ENCODE measurements at regions of chr1 and their contacts with region 1.

Region 1: GRCh38 chr1:19596714-19597495 is 47.2 kb upstream of the NBL1 start:
- DNase-seq: peak; percentile 99
- ATAC-seq: peak; percentile 94
- H3K4me3 ChIP-seq: peak overlapping the region; percentile 72 to 90 (median 78)
- H3K27ac ChIP-seq: peak overlapping the region; percentile 88
- H3K4me1 ChIP-seq: peaks cover 52% of the 10 kb centered on the region
- H3K27me3 ChIP-seq: no peaks in the 10 kb centered on the region; a peak in 1 of 5 replicates
- CTCF ChIP-seq: 0 out of 2 replicates have a peak, but pooled peaks have one; percentile 1
- EP300 ChIP-seq: 0 out of 4 replicates have a peak, but pooled peaks of 1 of the 2 experiments have one; percentile 5
- POLR2A ChIP-seq: peak; percentile 79 to 82
- RAD21 ChIP-seq: peak; percentile 39; the same call in 1 of the 2 replicates

Region 2: GRCh38 chr1:19384113-19384512 is 212.8 kb before region 1 on chr1:
- CTCF ChIA-PET with region 1: no interaction called
- POLR2A ChIA-PET with region 1: no interaction called
- in situ Hi-C with region 1: no loop called
- intact Hi-C with region 1: loop called (anchors 10 kb)
- DNase-seq: no peak
- ATAC-seq: no peak
- H3K4me3 ChIP-seq: no peak overlapping the region
- H3K27ac ChIP-seq: no peak overlapping the region
- H3K4me1 ChIP-seq: peaks cover 52% of the 10 kb centered on the region
- H3K27me3 ChIP-seq: no peaks in the 10 kb centered on the region
- CTCF ChIP-seq: no peak
- EP300 ChIP-seq: no peak
- POLR2A ChIP-seq: no peak
- RAD21 ChIP-seq: no peak

Region 3: DNA sequence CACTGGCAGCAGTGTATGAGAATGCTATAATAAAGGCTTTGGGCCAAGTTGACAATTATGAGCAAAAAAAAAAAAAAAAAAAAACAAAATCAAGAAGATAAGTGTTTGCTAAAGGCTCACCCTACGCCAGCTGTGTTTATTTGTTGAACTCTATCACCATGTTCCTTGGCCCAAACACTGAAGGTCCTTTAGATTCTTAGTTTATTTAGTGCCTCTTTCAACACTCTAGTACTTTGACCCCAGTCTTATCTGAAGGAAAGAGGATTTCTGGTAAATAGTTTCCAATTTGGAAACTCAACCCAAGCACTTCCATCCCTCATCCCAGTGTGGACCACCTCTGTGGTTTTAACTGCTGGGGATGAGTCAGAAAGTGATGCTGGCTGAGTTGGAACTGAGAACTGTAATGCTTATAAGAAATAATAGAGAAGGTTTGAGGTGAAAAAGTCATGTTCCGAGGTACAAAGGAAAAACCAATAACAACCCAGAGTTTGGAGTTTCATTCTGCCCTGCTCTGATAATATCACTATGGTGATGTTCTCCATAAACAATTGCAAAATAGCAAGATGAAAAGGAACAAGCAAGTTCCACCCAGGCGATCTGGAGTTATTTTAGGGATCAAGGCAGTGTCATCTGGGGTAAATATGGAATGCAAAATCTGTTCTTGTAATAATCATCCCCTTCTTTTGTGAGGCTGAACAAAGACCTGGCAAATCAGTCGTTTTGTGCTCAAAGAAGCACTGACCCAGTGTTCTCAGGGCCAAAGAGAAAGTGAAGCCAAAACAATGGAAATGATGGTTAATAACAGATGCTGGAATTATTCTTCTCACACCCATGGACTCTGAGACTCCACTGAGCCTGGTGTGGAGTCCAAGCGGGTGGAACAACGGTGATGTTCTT is 91.9 kb before region 1 on chr1:
- CTCF ChIA-PET with region 1: no interaction called
- POLR2A ChIA-PET with region 1: no interaction called
- in situ Hi-C with region 1: no loop called
- intact Hi-C with region 1: no loop called
- DNase-seq: no peak
- ATAC-seq: no peak
- H3K4me3 ChIP-seq: no peak overlapping the region
- H3K27ac ChIP-seq: no peak overlapping the region
- H3K4me1 ChIP-seq: peaks cover 27% of the 10 kb centered on the region
- H3K27me3 ChIP-seq: no peaks in the 10 kb centered on the region; a peak in 1 of 5 replicates
- CTCF ChIP-seq: no peak
- EP300 ChIP-seq: no peak
- POLR2A ChIP-seq: no peak
- RAD21 ChIP-seq: no peak

Region 4: GRCh38 chr1:19620786-19621185 is 23.9 kb after region 1 on chr1:
- CTCF ChIA-PET with region 1: no interaction called
- POLR2A ChIA-PET with region 1: interaction called, 10 read pairs
- in situ Hi-C with region 1: no loop called
- intact Hi-C with region 1: no loop called
- DNase-seq: no peak
- ATAC-seq: no peak
- H3K4me3 ChIP-seq: no peak overlapping the region
- H3K27ac ChIP-seq: no peak overlapping the region
- H3K4me1 ChIP-seq: peaks cover 63% of the 10 kb centered on the region
- H3K27me3 ChIP-seq: no peaks in the 10 kb centered on the region
- CTCF ChIP-seq: no peak
- EP300 ChIP-seq: no peak
- POLR2A ChIP-seq: no peak
- RAD21 ChIP-seq: no peak

Region 5: GRCh38 chr1:19643602-19644394 is 46.9 kb after region 1 on chr1 and contains the start of gene NBL1:
- CTCF ChIA-PET with region 1: no interaction called
- POLR2A ChIA-PET with region 1: interaction called, 4 read pairs
- in situ Hi-C with region 1: loop called (anchors 5 kb)
- intact Hi-C with region 1: loop called (anchors 5 kb)
- DNase-seq: no peak
- ATAC-seq: peak; percentile 8
- H3K4me3 ChIP-seq: peak within 1 kb of the TSS; percentile 68 to 83 (median 75)
- H3K27ac ChIP-seq: no peak within 1 kb of the TSS
- H3K4me1 ChIP-seq: peaks cover 53% of the 10 kb centered on the region
- H3K27me3 ChIP-seq: peaks cover 2 to 21% of the 10 kb centered on the region in 2 experiments; a peak in 3 of 5 replicates
- CTCF ChIP-seq: no peak
- EP300 ChIP-seq: no peak
- POLR2A ChIP-seq: no peak
- RAD21 ChIP-seq: no peak
- total RNA-seq, gene NBL1: 1.9 and 2.7 TPM in 2 replicates

Region 6: DNA sequence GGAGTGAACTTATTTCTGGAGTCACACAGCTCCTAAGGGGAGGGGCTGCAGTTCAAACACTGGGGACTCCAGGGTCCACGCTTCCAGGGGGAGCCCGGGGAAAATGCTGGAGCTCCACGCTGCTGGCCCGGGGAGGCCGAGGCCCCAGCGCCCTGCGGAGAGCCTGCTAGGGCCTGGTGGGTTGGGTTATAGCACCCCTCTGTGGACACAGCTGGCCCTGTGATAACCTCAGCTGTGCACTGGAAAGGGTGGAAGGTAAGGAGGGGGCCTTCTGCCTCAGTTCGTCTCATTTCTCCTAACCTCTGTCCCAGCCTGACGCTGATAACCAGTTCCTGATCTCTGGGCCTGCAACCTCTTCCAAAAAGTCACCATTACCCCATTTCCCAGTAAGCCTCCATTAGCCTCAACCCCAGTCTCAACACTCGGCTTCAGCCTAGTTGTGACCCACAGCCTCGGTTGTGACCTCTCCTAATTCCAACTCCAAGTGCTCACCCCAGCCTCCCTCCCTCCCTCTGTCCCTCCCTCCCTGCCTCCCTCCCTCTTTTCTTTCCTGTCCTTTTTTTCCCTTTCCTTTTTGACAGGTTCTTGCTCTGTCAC is 54.3 kb after region 1 on chr1:
- CTCF ChIA-PET with region 1: no interaction called
- POLR2A ChIA-PET with region 1: no interaction called
- in situ Hi-C with region 1: loop called (anchors 5 kb)
- intact Hi-C with region 1: loop called (anchors 2 kb)
- DNase-seq: peak; percentile 24
- ATAC-seq: peak; percentile 90
- H3K4me3 ChIP-seq: peak overlapping the region in 1 of 3 experiments; percentile 39; a peak in 1 of 6 replicates
- H3K27ac ChIP-seq: no peak overlapping the region
- H3K4me1 ChIP-seq: peaks cover 29% of the 10 kb centered on the region
- H3K27me3 ChIP-seq: no peaks in the 10 kb centered on the region
- CTCF ChIP-seq: peak; percentile 96
- EP300 ChIP-seq: no peak
- POLR2A ChIP-seq: no peak
- RAD21 ChIP-seq: peak; percentile 95

Measured in HepG2 (cell line).